ENCODE measurements at regions of chr21 and their contacts with region 1.

Region 1: DNA sequence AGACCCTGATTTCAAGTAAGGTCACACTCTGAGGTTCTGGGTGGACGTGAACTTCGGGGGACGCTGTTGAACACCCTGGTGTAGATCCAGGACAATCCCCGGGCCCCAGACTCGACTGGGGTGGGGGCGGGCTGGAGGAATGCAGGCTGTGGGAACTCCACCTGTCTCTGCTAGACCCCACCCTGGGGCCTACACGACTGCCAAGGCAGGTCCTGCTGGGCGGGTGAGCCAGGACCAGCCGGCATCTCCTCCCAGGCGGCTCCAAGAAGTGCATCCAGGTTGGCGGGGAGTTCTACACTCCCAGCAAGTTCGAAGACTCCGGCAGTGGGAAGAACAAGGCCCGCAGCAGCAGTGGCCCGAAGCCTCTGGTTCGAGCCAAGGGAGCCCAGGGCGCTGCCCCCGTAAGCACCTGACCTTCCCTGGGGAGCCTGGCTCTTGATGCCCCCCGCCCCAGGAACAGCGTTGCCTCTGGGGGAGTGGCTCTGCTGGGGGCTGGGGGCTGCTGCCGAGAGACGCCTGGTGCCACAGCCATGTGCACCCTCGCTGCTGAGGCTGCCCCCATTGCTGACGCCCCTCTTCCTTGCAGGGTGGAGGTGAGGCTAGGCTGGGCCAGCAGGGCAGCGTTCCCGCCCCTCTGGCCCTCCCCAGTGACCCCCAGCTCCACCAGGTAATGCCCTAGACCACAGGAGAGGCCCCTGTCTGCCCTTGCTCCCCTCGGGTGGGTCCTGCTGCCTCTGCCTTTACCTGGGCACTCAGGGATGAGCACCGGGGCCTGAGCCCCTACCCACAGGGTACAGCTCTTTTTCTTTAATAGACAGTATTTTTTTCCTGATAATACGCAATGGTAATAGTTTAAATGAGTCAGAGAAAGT is 4.0 kb downstream of the AIRE start:
- DNase-seq: no peak
- ATAC-seq: no peak
- H3K4me3 ChIP-seq: no peak overlapping the region
- H3K27ac ChIP-seq: no peak overlapping the region
- H3K4me1 ChIP-seq: peaks cover 2 to 13% (median 5%) of the 10 kb centered on the region in 9 donors
- H3K27me3 ChIP-seq: peaks cover 0 to 35% (median 21%) of the 10 kb centered on the region in 7 donors
- CTCF ChIP-seq: no peak

Region 2: DNA sequence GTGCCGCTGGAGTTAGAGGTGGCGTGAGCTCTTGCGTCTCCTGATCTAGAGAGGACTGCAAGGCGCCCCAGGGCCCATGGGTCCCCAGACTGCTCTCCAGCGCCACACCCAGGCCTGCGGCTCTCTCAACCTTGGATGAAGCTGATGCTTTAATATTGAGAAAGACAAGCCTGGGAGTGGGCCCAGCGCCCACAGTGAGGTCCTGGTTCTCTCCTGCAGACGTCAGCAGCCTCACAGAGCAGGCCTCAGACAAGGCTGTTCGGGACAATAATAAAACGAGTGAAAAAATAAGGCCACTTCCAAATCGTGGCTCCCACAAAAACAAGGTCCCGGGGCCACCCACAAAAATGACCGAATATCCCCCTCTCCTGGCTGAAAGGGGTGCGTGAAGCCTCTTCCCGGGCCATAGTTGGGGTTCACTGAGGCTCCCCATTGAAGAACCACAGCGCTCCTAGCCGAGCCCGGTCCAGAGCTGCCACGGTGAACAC is 21.9 kb before region 1 on chr21:
- intact Hi-C with region 1: loop called in 1 of 10 experiments (anchors 2 kb)
- DNase-seq: no peak
- ATAC-seq: peak in 4 of 8 donors; percentile 23 to 50 (median 28)
- H3K4me3 ChIP-seq: no peak overlapping the region
- H3K27ac ChIP-seq: no peak overlapping the region
- H3K4me1 ChIP-seq: no peaks in the 10 kb centered on the region
- H3K27me3 ChIP-seq: peaks cover 0 to 4% (median 0%) of the 10 kb centered on the region in 7 donors
- CTCF ChIP-seq: peak in 7 of 9 donors; percentile 16 to 45 (median 28)

Region 3: DNA sequence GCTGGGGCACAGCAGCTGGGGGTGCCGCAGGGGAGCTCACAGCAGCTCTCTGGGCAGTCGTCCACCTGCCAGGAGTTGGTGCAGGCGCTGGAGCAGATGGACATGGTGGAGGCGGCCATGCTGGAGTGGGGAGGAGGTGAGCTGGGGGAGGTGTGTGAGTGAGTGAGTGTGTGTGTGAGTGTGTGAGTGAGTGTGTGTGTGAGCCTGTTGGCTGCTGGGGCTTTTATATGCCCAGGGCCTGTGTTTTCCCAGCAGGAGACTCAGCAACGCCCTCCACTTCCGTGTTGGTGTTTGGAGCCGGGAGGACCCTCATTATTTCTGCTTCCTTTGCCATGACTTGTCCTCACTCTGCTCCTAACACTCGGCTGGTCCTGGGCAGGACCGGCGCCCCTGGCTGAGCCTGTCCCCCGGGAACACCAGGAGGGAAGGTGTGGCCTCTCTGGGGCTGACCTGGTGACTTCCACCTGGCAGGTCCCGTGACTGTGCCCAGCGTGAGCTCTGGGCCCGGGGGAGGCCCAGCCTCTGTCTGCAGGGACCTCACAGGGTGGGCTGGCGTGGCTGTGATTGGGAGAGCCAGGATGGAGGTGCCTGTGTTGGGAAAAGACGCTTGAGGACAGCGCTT is 261.8 kb after region 1 on chr21 and contains the start of gene KRTAP10-2:
- intact Hi-C with region 1: no loop called
- DNase-seq: no peak
- ATAC-seq: peak in 1 of 8 donors; percentile 34
- H3K4me3 ChIP-seq: no peak within 1 kb of the TSS
- H3K27ac ChIP-seq: no peak within 1 kb of the TSS
- H3K4me1 ChIP-seq: no peaks in the 10 kb centered on the region
- H3K27me3 ChIP-seq: peaks cover 0 to 80% (median 50%) of the 10 kb centered on the region in 7 donors
- CTCF ChIP-seq: no peak
- total RNA-seq, gene KRTAP10-2: not detected